Calu3 (cell line): ENCODE measurements at regions of chr7 and their contacts with region 1.

Region 1: GRCh38 chr7:30938435-30939316 is 25.1 kb upstream of the GHRHR start:
- DNase-seq: peak; percentile 99
- H3K4me3 Mint-ChIP-seq: no peak overlapping the region
- H3K27ac Mint-ChIP-seq: no peak overlapping the region
- H3K4me1 Mint-ChIP-seq: peaks cover 72% of the 10 kb centered on the region
- H3K27me3 Mint-ChIP-seq: no peaks in the 10 kb centered on the region
- CTCF ChIP-seq: peak; percentile 99

Region 2: GRCh38 chr7:30974605-30975255 is 36.1 kb after region 1 on chr7:
- CTCF ChIA-PET with region 1: interaction called, 16 read pairs
- intact Hi-C with region 1: loop called (anchors 1 kb)
- DNase-seq: peak; percentile 98
- H3K4me3 Mint-ChIP-seq: no peak overlapping the region
- H3K27ac Mint-ChIP-seq: peak overlapping the region; percentile 94
- H3K4me1 Mint-ChIP-seq: peaks cover 65% of the 10 kb centered on the region
- H3K27me3 Mint-ChIP-seq: peaks cover 34% of the 10 kb centered on the region
- CTCF ChIP-seq: peak; percentile 97